Right ventricle myocardium superior (tissue), 1 donor: ENCODE measurements at regions of chr11 and their contacts with region 1.

Region 1: DNA sequence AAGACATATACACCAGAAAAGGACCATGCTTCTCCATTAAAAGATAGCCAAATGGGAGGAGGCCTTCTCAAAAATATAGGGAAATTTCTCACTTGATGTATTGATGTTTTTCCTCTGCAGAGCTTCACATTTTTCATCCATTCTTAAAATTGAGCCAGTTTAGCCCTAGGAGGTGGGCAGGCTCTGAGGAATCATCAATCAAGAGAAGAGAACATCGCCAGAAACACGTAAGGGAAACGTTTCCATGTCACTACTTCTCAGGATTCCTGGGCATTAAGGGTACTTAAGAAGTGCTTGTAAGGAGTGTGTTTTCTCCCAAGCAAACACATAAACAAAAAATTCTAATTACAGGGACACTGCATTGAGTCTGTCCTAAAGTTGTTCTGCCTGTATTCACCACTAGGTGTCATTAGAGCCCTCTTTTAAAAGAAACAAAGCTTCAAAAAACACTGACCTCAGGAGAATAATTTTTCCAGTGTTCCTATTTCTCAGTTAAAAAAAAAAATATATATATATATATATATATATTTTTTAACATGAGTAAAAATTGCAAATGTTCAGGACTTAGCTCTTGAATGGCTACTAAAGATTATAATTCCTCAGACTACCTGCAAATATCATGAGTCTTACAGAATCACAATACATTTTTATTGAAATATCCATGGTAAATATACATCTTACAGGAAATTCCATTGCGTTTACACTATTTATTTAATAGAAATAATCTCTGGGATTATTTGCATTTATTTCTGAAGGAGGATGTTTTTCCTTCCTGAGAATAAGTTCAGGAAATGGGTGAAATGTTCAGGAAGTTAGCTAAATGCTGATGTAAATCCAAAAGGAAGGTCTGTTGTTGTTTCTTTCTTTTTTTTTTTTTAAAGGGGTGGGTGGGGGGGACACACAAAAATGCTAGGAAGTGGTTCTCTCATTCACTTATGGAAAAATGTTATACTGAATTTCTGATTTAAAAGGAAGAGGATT is 16.0 kb downstream of the FZD4 start:
- DNase-seq: no peak
- ATAC-seq: peak; percentile 52

Region 2: DNA sequence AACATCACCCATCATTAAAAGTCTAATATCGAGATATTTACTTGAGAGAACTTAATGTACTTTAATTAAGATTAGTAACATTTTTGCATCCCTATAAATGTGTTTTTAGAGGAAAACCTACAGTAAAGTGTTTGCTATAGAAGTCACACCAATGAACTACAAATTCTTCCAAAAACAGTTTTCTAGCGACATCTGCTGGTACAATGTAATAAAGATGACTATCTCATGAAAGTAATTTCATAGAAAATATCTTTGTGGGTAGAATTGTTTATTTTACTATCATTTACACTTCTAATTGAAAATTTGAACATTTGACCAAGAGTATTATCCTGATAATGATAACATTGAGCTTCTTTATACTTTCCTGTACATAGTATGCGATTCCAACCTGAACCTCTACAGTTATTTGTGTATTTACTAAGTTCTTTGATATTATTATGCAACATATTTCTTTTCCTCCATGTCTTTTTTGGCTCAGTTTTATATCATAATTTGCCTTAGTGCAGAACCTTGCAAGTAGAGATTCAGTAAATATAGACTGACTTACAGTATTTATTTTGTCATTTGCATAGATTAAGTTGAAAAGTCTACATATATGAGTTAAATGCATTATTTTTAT is 351.2 kb after region 1 on chr11:
- intact Hi-C with region 1: loop called (anchors 2 kb)
- DNase-seq: no peak
- ATAC-seq: peak; percentile 65

Region 3: GRCh38 chr11:87421422-87421821 is 482.2 kb after region 1 on chr11:
- intact Hi-C with region 1: loop called (anchors 5 kb)
- DNase-seq: no peak
- ATAC-seq: peak; percentile 94